CD4-positive, alpha-beta memory T cell (primary cell): ENCODE measurements at regions of chr1 and their contacts with region 1.

Region 1: DNA sequence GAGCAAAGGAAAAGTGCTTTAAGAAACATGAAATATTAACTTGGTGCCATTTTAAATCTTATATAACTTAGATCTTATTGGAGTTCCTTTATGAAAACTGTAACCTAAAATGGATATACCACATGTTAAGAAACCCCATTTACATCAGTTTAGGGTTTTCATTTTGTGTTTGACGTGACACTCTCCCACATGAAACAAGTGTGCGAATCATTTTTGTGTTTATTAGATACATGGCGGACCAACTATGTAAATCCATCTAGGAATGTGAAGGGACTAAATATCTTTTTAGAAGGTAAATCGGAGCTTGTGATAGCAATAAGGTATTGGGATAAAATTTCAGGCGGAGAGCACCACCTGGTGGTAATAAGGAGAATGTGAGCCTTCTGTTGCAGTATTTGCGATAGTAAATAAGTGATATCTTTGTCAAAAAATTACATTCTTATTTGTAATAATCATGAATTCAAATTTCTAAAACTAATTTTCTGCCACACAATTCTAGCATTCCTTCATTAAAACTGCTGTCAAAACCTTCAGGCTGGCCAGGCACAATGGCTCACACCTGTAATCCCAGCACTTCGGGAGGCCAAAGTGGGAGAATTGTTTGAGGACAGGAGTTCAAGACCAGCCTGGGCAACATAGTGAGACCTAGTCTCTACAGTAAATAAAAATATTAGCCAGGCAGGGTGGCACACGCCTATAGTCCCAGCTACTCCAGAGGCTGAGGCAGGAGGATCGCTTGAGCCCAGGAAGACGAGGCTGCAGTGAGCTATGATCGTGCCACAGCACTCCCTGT is 31.3 kb downstream of the SMAP2 start:
- DNase-seq: peak; percentile 70 to 79 (median 75)
- H3K4me3 ChIP-seq: no peak overlapping the region
- H3K4me3 Mint-ChIP-seq: peak overlapping the region; percentile 12 to 84 (median 60)
- H3K27ac ChIP-seq: peak overlapping the region; percentile 60
- H3K27ac Mint-ChIP-seq: peak overlapping the region; percentile 67 to 98 (median 96)
- H3K4me1 ChIP-seq: peaks cover 61% of the 10 kb centered on the region
- H3K4me1 Mint-ChIP-seq: peaks cover 41 to 74% (median 64%) of the 10 kb centered on the region in 4 donors
- H3K27me3 ChIP-seq: no peaks in the 10 kb centered on the region
- H3K27me3 Mint-ChIP-seq: no peaks in the 10 kb centered on the region

Region 2: GRCh38 chr1:40003156-40004148 is 401.4 kb before region 1 on chr1:
- CTCF ChIA-PET with region 1: no interaction called
- POLR2A ChIA-PET with region 1: no interaction called
- intact Hi-C with region 1: no loop called
- DNase-seq: peak in 1 of 5 donors; percentile 6
- H3K4me3 ChIP-seq: no peak overlapping the region
- H3K4me3 Mint-ChIP-seq: peak overlapping the region in 4 of 8 donors; percentile 45 to 66 (median 50)
- H3K27ac ChIP-seq: no peak overlapping the region
- H3K27ac Mint-ChIP-seq: peak overlapping the region in 5 of 7 donors; percentile 1 to 67 (median 57)
- H3K4me1 ChIP-seq: peaks cover 9% of the 10 kb centered on the region
- H3K4me1 Mint-ChIP-seq: peaks cover 8 to 21% (median 13%) of the 10 kb centered on the region in 4 donors
- H3K27me3 ChIP-seq: no peaks in the 10 kb centered on the region
- H3K27me3 Mint-ChIP-seq: no peaks in the 10 kb centered on the region

Region 3: DNA sequence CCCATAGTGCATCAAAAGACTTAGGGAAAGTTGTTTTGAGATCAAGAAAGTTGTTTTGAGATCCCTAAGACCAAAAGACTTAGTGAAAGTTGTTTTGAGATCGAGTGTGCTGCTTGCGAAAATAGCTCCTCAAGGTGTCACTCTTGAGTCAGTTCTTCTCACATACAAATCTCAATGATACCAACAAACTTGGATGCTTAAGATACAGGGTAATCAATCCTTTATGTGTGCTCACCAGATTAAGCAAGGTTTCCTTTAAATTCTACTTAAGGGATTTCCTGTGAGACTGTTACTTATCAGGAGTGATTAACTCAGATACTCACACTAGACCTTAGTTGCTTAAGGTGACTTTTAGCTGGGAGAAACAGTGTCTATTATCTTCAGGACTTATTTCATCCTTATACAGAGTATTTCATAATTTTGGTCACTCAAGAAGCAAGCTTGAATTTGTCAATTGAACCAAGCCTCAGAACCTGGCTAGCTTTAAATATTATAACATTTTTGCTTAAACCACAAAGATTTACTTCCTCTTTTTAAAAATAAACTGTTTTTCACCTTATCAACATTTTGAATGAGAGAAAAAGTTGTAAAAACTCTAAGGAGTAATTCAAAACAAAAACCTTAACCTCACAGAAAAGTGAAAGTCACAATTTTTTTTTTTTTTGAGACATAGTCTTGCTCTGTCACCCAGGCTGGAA is 251.6 kb before region 1 on chr1:
- CTCF ChIA-PET with region 1: interaction called, 42 read pairs
- POLR2A ChIA-PET with region 1: interaction called, 5 read pairs
- intact Hi-C with region 1: loop called (anchors 1 kb)
- DNase-seq: peak; percentile 38 to 58 (median 53)
- H3K4me3 ChIP-seq: no peak overlapping the region
- H3K4me3 Mint-ChIP-seq: peak overlapping the region in 5 of 8 donors; percentile 12 to 36 (median 26)
- H3K27ac ChIP-seq: no peak overlapping the region
- H3K27ac Mint-ChIP-seq: peak overlapping the region in 6 of 7 donors; percentile 25 to 77 (median 56)
- H3K4me1 ChIP-seq: no peaks in the 10 kb centered on the region
- H3K4me1 Mint-ChIP-seq: peaks cover 4 to 10% (median 5%) of the 10 kb centered on the region in 4 donors
- H3K27me3 ChIP-seq: no peaks in the 10 kb centered on the region
- H3K27me3 Mint-ChIP-seq: peaks cover 2 to 10% of the 10 kb centered on the region in 2 donors

Region 4: DNA sequence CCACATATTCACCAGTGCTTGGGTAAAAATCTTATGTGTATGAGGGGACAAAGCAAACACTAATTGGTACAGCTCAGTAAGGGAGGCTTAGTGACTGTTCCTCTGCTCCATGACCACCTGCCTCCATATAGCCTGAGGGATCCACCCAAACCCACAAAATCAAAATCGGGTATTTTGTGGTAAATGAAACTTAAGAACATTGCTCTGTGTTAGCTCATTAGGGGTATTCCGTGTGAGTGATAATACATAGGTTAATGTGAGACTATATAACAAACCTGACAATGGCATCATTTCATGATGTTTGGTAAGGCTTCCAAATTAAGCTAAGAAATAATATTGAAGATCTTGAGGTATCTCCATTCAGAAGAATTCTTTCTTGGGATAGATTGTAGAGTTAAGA is 113.6 kb before region 1 on chr1:
- CTCF ChIA-PET with region 1: no interaction called
- POLR2A ChIA-PET with region 1: no interaction called
- intact Hi-C with region 1: no loop called
- DNase-seq: no peak
- H3K4me3 ChIP-seq: no peak overlapping the region
- H3K4me3 Mint-ChIP-seq: no peak overlapping the region
- H3K27ac ChIP-seq: no peak overlapping the region
- H3K27ac Mint-ChIP-seq: peak overlapping the region in 2 of 7 donors; percentile 18 to 78
- H3K4me1 ChIP-seq: no peaks in the 10 kb centered on the region
- H3K4me1 Mint-ChIP-seq: no peaks in the 10 kb centered on the region
- H3K27me3 ChIP-seq: no peaks in the 10 kb centered on the region
- H3K27me3 Mint-ChIP-seq: no peaks in the 10 kb centered on the region

Region 5: DNA sequence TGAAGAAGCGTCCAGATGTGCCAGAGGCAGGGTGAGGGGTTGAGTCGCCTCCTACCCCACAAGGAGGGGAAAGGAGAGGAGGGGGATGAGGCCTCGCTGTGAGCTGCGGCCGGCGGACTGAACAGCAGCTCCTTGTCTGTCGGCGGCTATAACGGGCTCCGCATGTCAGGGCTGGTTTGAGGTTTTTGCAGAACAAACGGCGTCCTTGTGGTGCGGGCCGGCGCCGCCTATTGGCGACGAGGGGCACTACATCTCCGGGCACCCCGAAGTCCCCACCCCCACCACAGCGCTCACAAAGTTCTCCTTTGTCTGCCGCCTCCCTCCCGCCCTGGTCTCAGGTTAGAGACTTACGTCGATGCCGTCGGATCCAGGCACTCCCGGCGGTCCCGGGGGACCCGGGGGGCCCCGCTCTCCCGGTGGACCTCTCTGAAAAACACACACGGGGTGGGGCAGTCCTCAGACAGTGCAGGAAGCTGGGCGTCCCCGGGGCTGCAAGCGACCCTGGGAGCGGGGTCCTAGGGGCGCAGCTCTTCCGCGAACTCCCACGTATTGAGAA is 89.5 kb before region 1 on chr1:
- CTCF ChIA-PET with region 1: interaction called, 25 read pairs
- POLR2A ChIA-PET with region 1: interaction called, 5 read pairs
- intact Hi-C with region 1: loop called (anchors 1 kb)
- DNase-seq: peak; percentile 84 to 86 (median 85)
- H3K4me3 ChIP-seq: peak overlapping the region; percentile 65 to 74
- H3K4me3 Mint-ChIP-seq: peak overlapping the region; percentile 79 to 95 (median 87)
- H3K27ac ChIP-seq: no peak overlapping the region
- H3K27ac Mint-ChIP-seq: peak overlapping the region in 6 of 7 donors; percentile 15 to 72 (median 46)
- H3K4me1 ChIP-seq: peaks cover 44% of the 10 kb centered on the region
- H3K4me1 Mint-ChIP-seq: peaks cover 14 to 67% (median 35%) of the 10 kb centered on the region in 4 donors
- H3K27me3 ChIP-seq: no peaks in the 10 kb centered on the region
- H3K27me3 Mint-ChIP-seq: peaks cover 10 to 18% of the 10 kb centered on the region in 2 donors

Region 6: DNA sequence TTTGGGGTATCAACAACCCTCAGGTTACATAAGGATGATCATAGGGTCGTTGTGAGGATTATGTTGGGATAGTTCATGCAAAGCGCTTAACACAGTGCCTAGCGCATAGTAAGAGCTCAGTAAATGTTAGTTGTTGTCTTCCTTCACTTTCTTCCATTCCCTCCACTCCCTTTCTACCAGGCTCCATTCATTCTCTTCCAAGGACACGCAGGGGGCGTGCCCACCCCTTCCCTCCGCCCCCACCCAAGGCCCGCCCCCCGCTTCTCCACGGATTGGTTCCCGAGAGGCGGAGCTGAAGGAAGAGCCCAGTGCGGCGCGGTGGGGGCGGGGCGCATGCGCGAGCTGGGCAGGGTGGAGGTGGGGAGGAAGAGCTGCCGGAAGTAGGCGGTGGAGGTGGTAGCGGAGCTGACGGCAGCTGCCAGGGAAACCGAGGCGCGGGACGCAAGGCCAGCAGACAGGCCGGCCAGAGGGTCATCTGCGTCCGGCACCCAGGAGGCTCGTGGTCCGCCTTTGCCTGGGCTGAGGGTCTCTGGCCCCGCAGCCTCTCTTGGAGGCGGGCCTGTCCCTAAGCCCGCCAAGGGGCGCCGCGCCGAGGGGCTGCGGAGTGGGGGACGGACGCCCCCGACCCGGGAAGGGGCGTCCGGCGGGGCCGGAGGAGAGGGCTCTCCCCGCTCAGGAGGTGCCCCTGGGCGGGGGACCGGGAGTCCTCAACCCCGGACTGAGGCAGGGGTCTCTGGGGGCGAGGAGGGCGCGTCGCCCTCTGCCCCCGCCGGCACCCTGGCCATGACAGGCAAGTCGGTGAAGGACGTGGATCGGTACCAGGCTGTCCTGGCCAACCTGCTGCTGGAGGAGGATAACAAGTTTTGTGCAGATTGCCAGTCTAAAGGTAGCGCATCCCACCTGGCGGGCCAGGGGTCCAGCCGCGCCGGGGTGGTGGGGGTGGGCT is 31.3 kb before region 1 on chr1 and contains the start of gene SMAP2:
- CTCF ChIA-PET with region 1: interaction called, 21 read pairs
- POLR2A ChIA-PET with region 1: interaction called, 46 read pairs
- intact Hi-C with region 1: loop called (anchors 5 kb)
- DNase-seq: peak; percentile 94 to 96 (median 96)
- H3K4me3 ChIP-seq: peak within 1 kb of the TSS; percentile 84 to 90
- H3K4me3 Mint-ChIP-seq: peak within 1 kb of the TSS; percentile 98 to 100 (median 99)
- H3K27ac ChIP-seq: peak within 1 kb of the TSS; percentile 96
- H3K27ac Mint-ChIP-seq: peak within 1 kb of the TSS; percentile 97 to 100 (median 99)
- H3K4me1 ChIP-seq: peaks cover 45% of the 10 kb centered on the region
- H3K4me1 Mint-ChIP-seq: peaks cover 31 to 67% (median 49%) of the 10 kb centered on the region in 4 donors
- H3K27me3 ChIP-seq: no peaks in the 10 kb centered on the region
- H3K27me3 Mint-ChIP-seq: peaks cover 0 to 6% of the 10 kb centered on the region in 2 donors
- total RNA-seq, gene SMAP2: 123 TPM

Region 7: DNA sequence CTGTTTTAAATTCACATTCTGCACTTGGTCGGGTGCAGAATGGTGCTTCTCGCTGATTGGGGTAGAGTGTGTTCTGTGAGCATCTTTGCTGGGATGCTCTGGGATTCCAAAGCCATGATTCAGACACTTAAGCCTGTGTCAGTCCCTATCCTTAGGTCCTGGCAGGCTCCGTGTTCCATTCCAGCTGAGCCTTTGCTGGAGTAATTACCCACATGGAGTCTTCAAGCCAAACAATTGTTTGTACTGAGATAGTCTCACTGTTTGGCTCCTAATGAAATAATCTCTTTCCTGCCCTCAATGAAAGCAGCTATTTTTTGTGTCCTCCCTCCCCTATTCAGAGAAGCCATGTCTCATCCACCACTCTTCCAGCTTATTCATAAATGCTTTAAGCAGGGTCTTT is 12.6 kb before region 1 on chr1:
- CTCF ChIA-PET with region 1: interaction called, 52 read pairs
- POLR2A ChIA-PET with region 1: interaction called, 49 read pairs
- intact Hi-C with region 1: loop called (anchors 1 kb)
- DNase-seq: no peak
- H3K4me3 ChIP-seq: peak overlapping the region in 1 of 2 donors; percentile 2
- H3K4me3 Mint-ChIP-seq: peak overlapping the region; percentile 26 to 96 (median 54)
- H3K27ac ChIP-seq: peak overlapping the region; percentile 99
- H3K27ac Mint-ChIP-seq: peak overlapping the region; percentile 82 to 98 (median 96)
- H3K4me1 ChIP-seq: peaks cover 97% of the 10 kb centered on the region
- H3K4me1 Mint-ChIP-seq: peaks cover 78 to 97% (median 88%) of the 10 kb centered on the region in 4 donors
- H3K27me3 ChIP-seq: no peaks in the 10 kb centered on the region
- H3K27me3 Mint-ChIP-seq: no peaks in the 10 kb centered on the region

Region 8: GRCh38 chr1:40449684-40450494 is 45.0 kb after region 1 on chr1 and contains the start of gene ZFP69B:
- CTCF ChIA-PET with region 1: no interaction called
- POLR2A ChIA-PET with region 1: no interaction called
- intact Hi-C with region 1: no loop called
- DNase-seq: peak; percentile 81 to 86 (median 82)
- H3K4me3 ChIP-seq: peak within 1 kb of the TSS; percentile 75 to 82
- H3K4me3 Mint-ChIP-seq: peak within 1 kb of the TSS; percentile 86 to 96 (median 93)
- H3K27ac ChIP-seq: peak within 1 kb of the TSS; percentile 55
- H3K27ac Mint-ChIP-seq: peak within 1 kb of the TSS; percentile 76 to 95 (median 89)
- H3K4me1 ChIP-seq: peaks cover 18% of the 10 kb centered on the region
- H3K4me1 Mint-ChIP-seq: peaks cover 18 to 25% (median 21%) of the 10 kb centered on the region in 4 donors
- H3K27me3 ChIP-seq: no peaks in the 10 kb centered on the region
- H3K27me3 Mint-ChIP-seq: no peaks in the 10 kb centered on the region
- total RNA-seq, gene ZFP69B: 7.5 to 7.9 TPM